Spleen (tissue), 13 donors: ENCODE measurements at regions of chr10 and their contacts with region 1.

Region 1: GRCh38 chr10:60964257-60965235 is 20.6 kb upstream of the RHOBTB1 start:
- DNase-seq: peak; percentile 71
- H3K4me3 ChIP-seq: no peak overlapping the region
- H3K27ac ChIP-seq: peak overlapping the region in 6 of 8 donors; percentile 21 to 49 (median 35)
- H3K4me1 ChIP-seq: peaks cover 5 to 22% (median 14%) of the 10 kb centered on the region in 6 donors
- H3K27me3 ChIP-seq: no peaks in the 10 kb centered on the region
- CTCF ChIP-seq: peak in 10 of 11 experiments; percentile 60 to 80 (median 73)
- POLR2A ChIP-seq: no peak

Region 2: GRCh38 chr10:60883187-60883586 is 81.4 kb before region 1 on chr10:
- intact Hi-C with region 1: loop called (anchors 10 kb)
- DNase-seq: no peak
- H3K4me3 ChIP-seq: no peak overlapping the region
- H3K27ac ChIP-seq: no peak overlapping the region
- H3K4me1 ChIP-seq: no peaks in the 10 kb centered on the region
- H3K27me3 ChIP-seq: no peaks in the 10 kb centered on the region
- CTCF ChIP-seq: peak in 7 of 11 experiments; percentile 19 to 44 (median 38)
- POLR2A ChIP-seq: no peak